ENCODE measurements at regions of chr14 and their contacts with region 1.

Region 1: GRCh38 chr14:34300882-34301734 is 160.9 kb downstream of the SPTSSA start:
- DNase-seq: peak; percentile 61 to 65
- H3K4me3 ChIP-seq: no peak overlapping the region
- H3K4me1 ChIP-seq: peaks cover 4% of the 10 kb centered on the region; the same call in 1 of the 2 replicates
- H3K27me3 ChIP-seq: no peaks in the 10 kb centered on the region

Region 2: DNA sequence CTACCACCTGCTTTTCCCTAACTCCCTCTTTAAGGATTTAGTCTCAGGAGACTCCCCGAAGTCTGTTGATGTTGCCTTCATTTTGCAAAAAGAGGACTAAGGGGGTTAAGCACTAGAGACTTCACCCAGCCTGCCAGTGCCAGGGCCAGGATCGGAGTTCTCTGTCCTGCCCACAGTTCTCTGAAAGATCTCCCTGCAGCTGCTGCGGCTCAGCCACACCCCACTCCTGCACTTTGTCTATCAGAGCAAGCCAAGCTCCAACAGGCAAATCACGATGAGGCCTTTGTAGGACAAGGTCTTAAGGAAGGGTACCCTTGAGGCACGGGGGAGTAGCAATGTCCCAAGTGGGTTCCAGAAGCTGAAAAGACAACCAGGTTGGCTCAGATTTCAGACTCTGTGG is 201.5 kb before region 1 on chr14:
- in situ Hi-C with region 1: loop called (anchors 10 kb)
- DNase-seq: no peak
- H3K4me3 ChIP-seq: no peak overlapping the region
- H3K4me1 ChIP-seq: peaks cover 13% of the 10 kb centered on the region
- H3K27me3 ChIP-seq: no peaks in the 10 kb centered on the region